ENCODE measurements at regions of chr16 and their contacts with region 1.

Region 1: GRCh38 chr16:75074920-75075687 is 41.5 kb downstream of the LDHD start:
- DNase-seq: peak; percentile 86 to 91 (median 87)
- H3K4me3 ChIP-seq: peak overlapping the region; percentile 5 to 44
- H3K4me3 Mint-ChIP-seq: peak overlapping the region; percentile 59 to 81 (median 72)
- H3K27ac ChIP-seq: peak overlapping the region; percentile 39
- H3K27ac Mint-ChIP-seq: peak overlapping the region; percentile 75 to 98 (median 95)
- H3K4me1 ChIP-seq: peaks cover 53% of the 10 kb centered on the region
- H3K4me1 Mint-ChIP-seq: peaks cover 45 to 66% (median 59%) of the 10 kb centered on the region in 4 donors
- H3K27me3 ChIP-seq: no peaks in the 10 kb centered on the region
- H3K27me3 Mint-ChIP-seq: no peaks in the 10 kb centered on the region

Region 2: DNA sequence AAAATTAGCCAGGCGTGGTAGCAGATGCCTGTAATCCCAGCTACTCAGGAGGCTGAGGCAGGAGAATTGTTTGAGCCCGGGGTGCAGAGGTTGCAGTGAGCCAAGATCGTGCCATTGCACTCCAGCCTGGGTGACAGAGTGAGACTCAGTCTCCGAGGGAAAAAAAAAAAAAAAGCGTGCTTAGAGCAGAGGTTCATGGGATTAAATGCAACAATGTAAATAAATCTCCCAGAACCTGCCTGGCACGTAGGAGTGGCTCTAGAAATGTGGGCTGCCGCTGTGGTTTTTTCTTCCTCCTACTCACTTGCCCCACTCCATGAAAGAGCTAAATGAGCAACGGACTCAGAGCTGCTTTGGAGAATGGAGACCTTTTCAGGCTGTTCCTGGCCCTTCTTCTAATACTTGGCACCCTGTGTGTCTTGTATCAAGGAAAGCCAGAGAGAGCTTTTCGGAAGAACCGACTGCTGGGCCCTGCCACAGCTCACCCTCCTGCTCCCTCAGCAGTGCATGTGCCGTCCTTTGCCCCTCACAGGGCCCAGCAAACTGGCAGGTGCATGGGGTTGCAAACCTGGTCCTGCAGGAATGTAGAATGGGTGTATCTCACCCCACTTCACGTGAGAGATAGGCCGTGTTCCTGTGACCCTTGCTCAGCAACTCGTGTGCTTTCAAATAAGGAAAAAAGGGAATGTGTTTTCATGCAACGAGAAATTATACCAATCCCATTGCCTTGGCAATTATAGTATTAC is 10.5 kb before region 1 on chr16:
- CTCF ChIA-PET with region 1: interaction called, 6 read pairs
- POLR2A ChIA-PET with region 1: interaction called, 22 read pairs
- intact Hi-C with region 1: loop called (anchors 1 kb)
- DNase-seq: peak in 1 of 5 donors; percentile 4
- H3K4me3 ChIP-seq: peak overlapping the region in 1 of 2 donors; percentile 2
- H3K4me3 Mint-ChIP-seq: peak overlapping the region; percentile 46 to 76 (median 69)
- H3K27ac ChIP-seq: peak overlapping the region; percentile 6
- H3K27ac Mint-ChIP-seq: peak overlapping the region; percentile 72 to 94 (median 91)
- H3K4me1 ChIP-seq: peaks cover 33% of the 10 kb centered on the region
- H3K4me1 Mint-ChIP-seq: peaks cover 18 to 38% (median 28%) of the 10 kb centered on the region in 4 donors
- H3K27me3 ChIP-seq: no peaks in the 10 kb centered on the region
- H3K27me3 Mint-ChIP-seq: no peaks in the 10 kb centered on the region

Region 3: DNA sequence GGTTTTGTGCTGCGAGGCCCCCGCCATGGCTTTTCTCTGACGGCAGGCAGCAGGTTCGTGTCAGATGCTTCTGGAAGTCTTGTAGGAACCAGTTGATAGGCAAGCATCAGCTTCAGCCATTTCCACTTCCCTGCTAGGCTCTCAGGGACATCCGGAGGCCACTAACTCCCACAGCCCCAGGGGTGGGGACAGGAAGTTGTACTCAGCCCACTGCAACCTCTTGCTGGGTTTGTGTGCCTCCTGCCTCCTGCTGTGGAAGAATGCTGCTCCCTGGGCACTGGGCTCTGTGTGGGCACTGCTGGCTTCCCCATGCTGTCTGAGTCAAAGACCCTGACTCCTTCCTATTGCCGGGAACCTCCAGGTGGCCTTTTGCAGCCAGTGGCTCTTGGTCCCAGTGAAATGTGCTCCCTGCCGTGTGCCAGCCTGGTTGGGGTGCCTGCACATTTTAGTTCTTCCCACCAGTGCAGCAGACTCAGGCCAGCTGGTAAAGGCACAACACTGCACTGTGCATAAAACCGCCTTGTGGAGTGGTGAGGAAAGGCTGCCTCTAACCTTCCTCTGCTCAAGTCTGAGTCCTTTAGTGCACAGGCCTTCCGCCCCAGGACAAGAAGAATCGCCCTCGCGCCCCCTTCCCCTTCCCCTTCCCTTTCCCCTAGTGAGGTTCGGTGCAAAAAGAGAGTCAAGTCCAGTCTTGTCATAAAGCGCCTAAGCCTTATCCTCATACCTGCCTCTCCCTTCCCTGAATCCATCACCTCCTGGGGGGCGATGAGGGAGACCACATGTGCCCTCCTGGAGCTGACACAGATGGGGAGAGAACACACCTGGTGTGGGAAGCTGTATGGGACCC is 24.9 kb after region 1 on chr16:
- CTCF ChIA-PET with region 1: interaction called, 6 read pairs
- POLR2A ChIA-PET with region 1: interaction called, 23 read pairs
- intact Hi-C with region 1: loop called (anchors 2 kb)
- DNase-seq: peak; percentile 36 to 58 (median 43)
- H3K4me3 ChIP-seq: peak overlapping the region in 1 of 2 donors; percentile 6
- H3K4me3 Mint-ChIP-seq: peak overlapping the region; percentile 10 to 82 (median 63)
- H3K27ac ChIP-seq: peak overlapping the region; percentile 70
- H3K27ac Mint-ChIP-seq: peak overlapping the region; percentile 93 to 98 (median 97)
- H3K4me1 ChIP-seq: peaks cover 45% of the 10 kb centered on the region
- H3K4me1 Mint-ChIP-seq: peaks cover 31 to 61% (median 37%) of the 10 kb centered on the region in 4 donors
- H3K27me3 ChIP-seq: no peaks in the 10 kb centered on the region
- H3K27me3 Mint-ChIP-seq: no peaks in the 10 kb centered on the region

Region 4: DNA sequence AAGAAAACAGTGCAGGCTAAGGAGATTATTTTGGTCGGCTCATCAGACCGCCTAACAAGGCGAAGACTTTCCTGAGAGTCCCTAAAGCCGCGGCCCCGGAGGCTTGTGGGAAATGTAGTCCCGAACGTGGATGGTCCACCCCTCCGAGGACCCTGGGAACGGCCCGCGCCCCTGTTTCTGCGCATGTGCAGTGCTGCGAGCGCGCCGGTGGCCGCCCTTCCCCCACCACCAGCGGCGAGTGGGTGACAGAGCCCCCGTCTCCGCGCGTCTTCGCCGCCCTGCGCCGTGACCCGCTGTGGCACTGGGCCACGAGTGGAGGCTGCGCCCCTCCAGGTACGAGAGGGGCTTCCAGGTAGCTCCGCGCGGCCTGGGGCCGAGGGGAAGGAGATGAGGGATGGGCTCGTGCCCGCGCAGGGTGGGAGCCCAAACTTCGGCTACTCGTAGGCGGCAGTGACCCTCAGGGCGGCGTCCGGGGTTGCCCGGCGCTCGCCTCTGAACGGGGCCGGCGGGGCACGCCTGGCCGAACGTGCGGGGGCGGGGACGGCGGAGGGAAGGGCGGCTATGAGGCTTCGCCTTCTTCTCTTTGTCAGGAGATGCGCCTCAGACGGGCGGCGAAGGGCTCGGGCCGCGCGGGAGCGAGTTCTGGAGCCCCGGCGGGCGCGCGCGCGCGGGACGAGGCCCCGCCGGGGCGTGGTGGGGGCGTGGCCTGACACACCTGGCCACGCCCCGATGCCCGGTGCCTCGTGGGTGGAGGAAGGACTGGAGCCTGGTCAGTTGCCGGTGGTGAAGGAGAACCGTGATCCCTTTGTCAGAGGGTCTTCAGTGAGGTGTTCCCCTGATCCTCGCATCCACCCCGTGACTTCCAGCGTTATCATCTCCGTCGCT is 73.4 kb after region 1 on chr16 and contains the start of gene ZFP1:
- CTCF ChIA-PET with region 1: no interaction called
- POLR2A ChIA-PET with region 1: no interaction called
- intact Hi-C with region 1: loop called (anchors 1 kb)
- DNase-seq: peak; percentile 92 to 96 (median 93)
- H3K4me3 ChIP-seq: peak within 1 kb of the TSS; percentile 44 to 95
- H3K4me3 Mint-ChIP-seq: peak within 1 kb of the TSS; percentile 82 to 91 (median 88)
- H3K27ac ChIP-seq: peak within 1 kb of the TSS; percentile 75
- H3K27ac Mint-ChIP-seq: peak within 1 kb of the TSS; percentile 75 to 93 (median 91)
- H3K4me1 ChIP-seq: peaks cover 5% of the 10 kb centered on the region
- H3K4me1 Mint-ChIP-seq: peaks cover 8 to 23% (median 13%) of the 10 kb centered on the region in 4 donors
- H3K27me3 ChIP-seq: no peaks in the 10 kb centered on the region
- H3K27me3 Mint-ChIP-seq: no peaks in the 10 kb centered on the region
- total RNA-seq, gene ZFP1: 11.7 to 13.4 TPM

Measured in CD4-positive, alpha-beta memory T cell (primary cell).